ENCODE measurements at regions of chr19 and their contacts with region 1.

Region 1: DNA sequence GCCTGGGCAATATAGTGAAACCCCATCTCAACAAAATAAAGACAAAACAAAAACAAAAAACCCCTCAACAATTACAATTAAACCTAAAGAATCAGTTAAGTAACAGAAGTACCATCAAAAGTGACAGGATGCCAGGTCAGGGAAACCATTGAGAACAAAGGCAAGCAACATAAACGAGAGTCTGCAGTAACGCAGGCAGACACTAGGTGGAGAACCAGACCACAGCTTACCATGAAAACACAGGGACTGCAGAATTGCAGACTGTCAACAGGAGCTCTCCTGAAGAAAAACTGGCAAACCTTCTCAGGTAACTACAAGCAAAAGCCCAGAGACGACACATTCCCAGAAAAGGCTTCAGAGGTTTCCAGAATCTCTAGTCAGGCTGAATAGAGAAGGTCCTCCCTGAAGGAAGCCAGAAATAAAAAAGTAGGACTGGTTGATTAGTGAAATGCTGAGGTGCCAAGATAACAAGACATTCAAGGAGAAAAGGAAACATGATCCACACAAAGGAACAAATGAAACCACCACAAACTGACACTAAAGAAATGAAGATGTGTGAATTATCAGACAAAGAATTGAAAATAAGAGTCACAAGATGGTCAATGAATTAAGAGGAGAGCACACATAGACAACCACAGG is 2.2 kb upstream of the ZNF665 start:
- DNase-seq: peak in 4 of 5 donors; percentile 68 to 79 (median 75)
- ATAC-seq: peak in 3 of 4 donors; percentile 47 to 60 (median 55)
- H3K4me3 ChIP-seq: no peak overlapping the region
- H3K27ac ChIP-seq: peak overlapping the region in 1 of 12 donors; percentile 0
- H3K4me1 ChIP-seq: peaks cover 0 to 33% (median 13%) of the 10 kb centered on the region in 12 donors
- H3K27me3 ChIP-seq: no peaks in the 10 kb centered on the region
- CTCF ChIP-seq: peak; percentile 74 to 95 (median 92)
- POLR2A ChIP-seq: no peak

Region 2: DNA sequence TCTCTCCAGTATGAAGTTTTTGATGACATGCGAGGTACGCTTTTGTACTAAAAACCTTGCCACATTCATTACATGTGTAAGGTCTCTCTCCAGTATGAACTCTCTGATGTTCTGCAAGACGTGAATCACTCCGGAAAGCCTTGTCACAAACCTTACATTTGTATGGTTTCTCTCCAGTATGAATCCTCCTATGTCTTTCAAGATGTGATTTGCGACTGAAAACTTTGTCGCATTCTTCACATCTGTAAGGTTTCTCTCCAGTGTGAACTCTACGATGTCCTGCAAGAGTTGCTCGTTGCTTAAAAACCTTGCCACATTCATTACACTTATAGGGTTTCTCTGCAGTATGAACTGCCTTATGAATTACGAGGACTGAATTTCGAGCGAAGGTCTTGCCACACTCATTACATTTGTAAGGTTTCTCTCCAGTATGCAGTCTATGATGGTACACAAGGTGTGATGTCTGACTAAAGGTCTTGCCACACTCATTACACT is 314.4 kb before region 1 on chr19:
- intact Hi-C with region 1: no loop called
- DNase-seq: no peak
- ATAC-seq: no peak
- H3K4me3 ChIP-seq: no peak overlapping the region
- H3K27ac ChIP-seq: no peak overlapping the region
- H3K4me1 ChIP-seq: no peaks in the 10 kb centered on the region
- H3K27me3 ChIP-seq: no peaks in the 10 kb centered on the region
- CTCF ChIP-seq: no peak
- POLR2A ChIP-seq: no peak

Region 3: GRCh38 chr19:53103198-53103944 is 92.0 kb before region 1 on chr19 and contains the start of gene ZNF160:
- intact Hi-C with region 1: loop called in 1 of 10 experiments (anchors 5 kb)
- DNase-seq: peak; percentile 99 to 100 (median 100)
- ATAC-seq: peak; percentile 98 to 99 (median 99)
- H3K4me3 ChIP-seq: peak within 1 kb of the TSS; percentile 67 to 99 (median 89)
- H3K27ac ChIP-seq: peak within 1 kb of the TSS; percentile 83 to 97 (median 92)
- H3K4me1 ChIP-seq: peaks cover 6 to 45% (median 24%) of the 10 kb centered on the region in 12 donors
- H3K27me3 ChIP-seq: no peaks in the 10 kb centered on the region
- CTCF ChIP-seq: no peak
- POLR2A ChIP-seq: peak; percentile 43 to 83
- total RNA-seq, gene ZNF160: 10.0 to 24.7 (median 17.0) TPM

Region 4: DNA sequence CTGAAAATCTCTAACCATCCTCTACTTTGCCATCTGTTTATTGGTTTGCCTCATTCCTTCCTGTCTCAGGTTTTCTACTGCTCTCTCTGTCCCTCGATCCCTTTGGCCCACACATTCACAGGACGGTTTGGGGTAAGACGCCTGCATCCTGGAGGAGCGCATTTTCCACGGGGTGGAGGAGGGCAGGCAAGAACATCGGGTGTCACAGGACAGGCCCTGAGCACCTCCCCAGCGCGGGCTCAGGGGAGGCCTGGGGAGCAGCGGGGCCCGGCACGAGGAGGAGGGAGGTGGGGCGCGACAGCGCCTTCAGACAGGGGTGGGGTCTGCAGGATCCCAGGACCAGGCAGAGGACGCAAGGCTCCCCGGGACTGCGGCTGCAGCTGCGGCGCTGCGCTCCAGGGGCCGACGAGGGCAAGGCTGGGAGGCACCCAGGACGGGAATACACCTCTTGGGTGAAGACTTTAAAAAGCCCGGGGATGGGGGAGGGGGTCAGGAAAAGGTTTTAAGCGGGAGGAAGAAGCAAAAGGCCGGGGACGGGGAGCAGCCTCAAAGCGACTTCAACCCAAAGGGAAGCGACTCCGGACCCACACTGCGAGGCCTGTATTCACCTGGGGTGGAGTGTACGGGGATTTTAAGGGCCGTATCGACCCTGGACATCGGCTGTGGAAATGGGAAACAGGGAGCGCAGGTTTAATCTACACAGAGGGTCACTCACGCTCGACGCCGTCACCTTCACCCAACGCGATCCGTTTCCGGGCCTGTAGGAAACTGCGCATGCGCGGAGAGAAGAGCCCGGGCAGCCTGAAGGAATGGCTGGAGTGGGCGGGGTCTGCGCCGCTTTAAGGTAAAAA is 63.0 kb before region 1 on chr19 and contains the start of gene ZNF415:
- intact Hi-C with region 1: no loop called
- DNase-seq: peak; percentile 89 to 94 (median 91)
- ATAC-seq: peak; percentile 91 to 96 (median 94)
- H3K4me3 ChIP-seq: peak within 1 kb of the TSS; percentile 50 to 86 (median 70)
- H3K27ac ChIP-seq: peak within 1 kb of the TSS; percentile 66 to 92 (median 86)
- H3K4me1 ChIP-seq: peaks cover 0 to 34% (median 17%) of the 10 kb centered on the region in 12 donors
- H3K27me3 ChIP-seq: no peaks in the 10 kb centered on the region
- CTCF ChIP-seq: no peak
- POLR2A ChIP-seq: peak in 1 of 2 donors; percentile 31
- total RNA-seq, gene ZNF415: 12.8 to 38.6 (median 21.4) TPM

Region 5: GRCh38 chr19:53254411-53255341 is 59.3 kb after region 1 on chr19 and contains the start of gene ZNF677:
- intact Hi-C with region 1: loop called in 4 of 10 experiments (anchors 5 to 10 kb)
- DNase-seq: peak; percentile 94 to 98 (median 97)
- ATAC-seq: peak; percentile 100
- H3K4me3 ChIP-seq: peak within 1 kb of the TSS; percentile 60 to 96 (median 86)
- H3K27ac ChIP-seq: peak within 1 kb of the TSS; percentile 69 to 92 (median 82)
- H3K4me1 ChIP-seq: peaks cover 0 to 17% (median 6%) of the 10 kb centered on the region in 12 donors
- H3K27me3 ChIP-seq: no peaks in the 10 kb centered on the region
- CTCF ChIP-seq: peak in 1 of 12 donors; percentile 8
- POLR2A ChIP-seq: peak in 1 of 2 donors; percentile 67
- total RNA-seq, gene ZNF677: 10.3 to 27.8 (median 16.9) TPM

Region 6: GRCh38 chr19:53365134-53365898 is 169.9 kb after region 1 on chr19 and contains the start of gene ZNF525:
- intact Hi-C with region 1: loop called in 7 of 10 experiments (anchors 1 to 10 kb)
- DNase-seq: peak; percentile 83 to 95 (median 86)
- ATAC-seq: peak; percentile 95 to 100 (median 100)
- H3K4me3 ChIP-seq: peak within 1 kb of the TSS; percentile 55 to 81 (median 69)
- H3K27ac ChIP-seq: peak within 1 kb of the TSS in 9 of 12 donors; percentile 46 to 70 (median 57)
- H3K4me1 ChIP-seq: peaks cover 0 to 13% (median 5%) of the 10 kb centered on the region in 12 donors
- H3K27me3 ChIP-seq: no peaks in the 10 kb centered on the region
- CTCF ChIP-seq: peak in 5 of 12 donors; percentile 4 to 23 (median 14)
- POLR2A ChIP-seq: peak in 1 of 2 donors; percentile 33
- total RNA-seq, gene ZNF525: 1.6 to 6.0 (median 3.6) TPM

Region 7: DNA sequence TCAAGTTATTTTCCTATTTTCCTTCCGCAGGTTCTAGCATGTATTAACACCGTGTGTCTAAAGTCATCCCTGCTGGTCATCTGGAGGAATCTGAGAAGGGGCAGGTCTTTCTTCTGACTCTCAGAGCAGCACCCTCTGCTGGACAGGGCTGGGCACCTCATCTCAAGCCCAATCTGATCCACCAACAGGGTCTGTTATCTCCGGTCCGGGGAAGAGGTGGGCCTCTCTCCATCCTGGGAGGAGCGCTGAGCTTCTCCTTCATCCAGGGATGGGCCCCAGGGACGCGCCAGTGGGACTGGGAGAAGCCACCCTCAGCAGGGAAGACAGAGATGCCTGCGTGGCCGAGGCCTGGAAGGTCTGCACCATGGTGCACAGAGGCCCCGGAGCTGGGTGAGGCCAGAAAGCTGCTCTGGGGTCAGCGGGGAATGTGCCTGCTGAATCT is 316.6 kb after region 1 on chr19:
- intact Hi-C with region 1: loop called in 7 of 10 experiments (anchors 5 to 10 kb)
- DNase-seq: peak in 4 of 5 donors; percentile 32 to 58 (median 50)
- ATAC-seq: peak in 3 of 4 donors; percentile 77 to 85 (median 83)
- H3K4me3 ChIP-seq: no peak overlapping the region
- H3K27ac ChIP-seq: no peak overlapping the region
- H3K4me1 ChIP-seq: peaks cover 0 to 5% (median 0%) of the 10 kb centered on the region in 12 donors
- H3K27me3 ChIP-seq: peaks cover 0 to 8% (median 0%) of the 10 kb centered on the region in 9 donors
- CTCF ChIP-seq: peak; percentile 44 to 77 (median 60)
- POLR2A ChIP-seq: no peak

Measured in heart left ventricle (tissue), 16 donors.